Cardiac septum (tissue), 1 donor: ENCODE measurements at regions of chr18 and their contacts with region 1.

Region 1: GRCh38 chr18:56575819-56576663 is 62.4 kb downstream of the TXNL1 start:
- DNase-seq: no peak

Region 2: DNA sequence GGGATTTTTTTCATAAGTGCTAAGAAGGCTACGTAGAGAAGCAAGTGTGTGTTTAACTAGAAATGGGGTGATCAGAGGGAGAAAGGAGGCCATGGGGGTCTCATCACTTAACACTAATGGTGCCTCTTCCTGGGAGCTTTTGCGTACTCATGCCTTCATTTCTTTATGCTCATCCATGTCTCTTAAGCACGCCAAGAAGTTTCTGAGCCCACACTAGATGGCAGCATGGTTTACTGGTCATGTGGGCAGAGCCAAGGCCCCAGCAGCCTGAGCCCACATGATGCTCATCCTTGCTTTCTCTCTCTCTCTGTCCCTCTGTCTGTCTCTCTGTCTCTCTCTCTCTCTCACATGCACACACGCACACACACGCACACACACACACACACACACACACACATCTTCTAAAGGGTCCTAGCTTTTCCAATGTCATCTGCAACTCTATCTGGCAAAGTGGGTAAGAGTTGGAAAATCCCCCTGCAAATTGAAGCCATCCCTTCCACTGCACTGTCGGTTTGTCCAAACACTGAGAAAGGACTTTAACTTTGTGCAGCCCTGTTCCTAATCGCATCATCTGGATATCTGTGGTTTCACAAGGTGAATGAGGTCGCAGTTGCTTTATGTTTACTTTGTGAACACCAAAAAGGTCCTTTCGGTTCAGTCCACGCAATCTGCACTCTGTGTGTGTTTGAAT is 1479.6 kb before region 1 on chr18:
- intact Hi-C with region 1: loop called (anchors 10 kb)
- DNase-seq: no peak

Region 3: GRCh38 chr18:55234366-55235093 is 1341.5 kb before region 1 on chr18:
- intact Hi-C with region 1: loop called (anchors 5 kb)
- DNase-seq: peak; percentile 76

Region 4: GRCh38 chr18:55415258-55415871 is 1160.7 kb before region 1 on chr18:
- intact Hi-C with region 1: loop called (anchors 5 kb)
- DNase-seq: peak; percentile 89

Region 5: GRCh38 chr18:55869556-55870501 is 706.2 kb before region 1 on chr18:
- intact Hi-C with region 1: loop called (anchors 10 kb)
- DNase-seq: no peak

Region 6: DNA sequence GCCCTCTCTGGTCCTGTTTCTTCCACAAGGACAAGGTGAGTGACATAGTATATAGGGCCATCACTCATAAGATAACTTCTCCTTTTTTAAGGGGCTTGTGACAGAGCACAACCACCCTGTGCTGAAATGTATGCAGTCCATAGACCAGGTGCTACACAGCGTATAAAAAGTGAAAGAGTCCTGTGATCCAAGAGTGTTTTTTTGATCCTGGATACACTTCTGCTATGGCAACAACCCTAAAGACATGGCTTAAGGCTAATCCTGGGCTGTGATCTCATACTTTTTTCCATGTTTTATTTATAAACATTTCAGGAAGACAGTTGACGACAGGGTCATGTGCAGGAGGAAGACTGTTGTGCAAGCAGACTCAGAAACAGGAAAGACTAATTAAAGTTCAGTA is 587.5 kb before region 1 on chr18:
- intact Hi-C with region 1: loop called (anchors 10 kb)
- DNase-seq: no peak

Region 7: GRCh38 chr18:56112013-56112749 is 463.9 kb before region 1 on chr18:
- intact Hi-C with region 1: loop called (anchors 10 kb)
- DNase-seq: no peak